ENCODE measurements at regions of chr1 and their contacts with region 1.

Region 1: DNA sequence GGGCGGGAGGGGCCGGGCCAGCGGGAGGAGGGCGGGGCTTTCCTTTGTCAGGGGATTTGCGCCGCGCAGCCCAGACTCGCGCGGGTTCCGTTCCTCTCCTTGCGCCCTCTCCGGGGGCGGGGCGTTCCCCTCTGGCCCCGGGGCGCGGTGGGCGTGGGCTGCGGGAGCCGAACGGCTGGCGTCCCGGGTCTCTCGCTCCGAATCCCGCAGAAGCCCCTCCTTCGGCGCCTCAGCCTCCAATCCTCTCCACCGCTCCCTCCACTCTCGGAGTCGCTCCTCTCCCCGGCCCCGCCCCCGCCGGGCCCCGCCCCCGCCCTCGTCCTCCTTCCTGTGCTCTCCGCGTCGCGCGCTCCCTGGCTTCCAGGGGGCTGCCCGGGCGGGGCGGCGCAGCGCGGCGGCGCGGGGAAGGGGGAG is 82.8 kb upstream of the BMP8A start:
- DNase-seq: peak; percentile 83
- H3K4me3 Mint-ChIP-seq: peak overlapping the region; percentile 88
- H3K27ac Mint-ChIP-seq: no peak overlapping the region
- H3K4me1 Mint-ChIP-seq: peaks cover 58% of the 10 kb centered on the region
- H3K27me3 Mint-ChIP-seq: no peaks in the 10 kb centered on the region

Region 2: DNA sequence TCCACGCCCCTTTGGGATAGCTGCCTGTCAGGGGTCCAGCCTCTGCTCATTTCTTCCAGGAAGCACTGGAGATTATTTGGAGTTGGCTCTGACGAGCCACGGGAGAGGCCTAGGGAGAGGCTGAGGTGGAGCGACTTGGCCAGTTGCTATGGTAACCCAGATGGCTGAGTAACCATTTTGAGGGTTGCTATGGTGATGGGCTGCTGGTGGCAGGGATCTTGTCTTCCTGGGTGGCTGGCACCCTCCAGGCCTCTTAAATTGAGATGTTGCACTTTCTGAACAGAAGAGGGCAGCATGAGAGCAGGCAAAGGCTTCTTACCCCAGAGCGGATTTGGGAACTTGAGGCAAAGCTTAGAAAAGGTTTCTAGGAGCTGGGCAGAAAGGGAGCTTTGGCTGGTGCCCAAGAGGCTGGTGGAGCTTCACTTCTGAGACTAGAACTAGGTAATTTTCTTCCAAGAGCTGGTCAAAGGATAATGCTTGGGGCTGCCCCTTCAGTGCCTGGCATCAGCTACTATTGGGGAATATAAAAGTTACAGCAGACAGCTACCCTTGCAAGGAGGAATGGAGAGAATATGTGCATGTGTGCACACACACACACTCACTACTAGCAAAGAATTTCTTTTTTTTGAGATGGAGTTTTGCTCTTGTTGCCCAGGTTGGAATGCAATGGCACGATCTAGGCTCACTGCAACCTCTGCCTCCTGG is 309.9 kb before region 1 on chr1:
- intact Hi-C with region 1: loop called (anchors 1 kb)
- DNase-seq: peak; percentile 53
- H3K4me3 Mint-ChIP-seq: no peak overlapping the region
- H3K27ac Mint-ChIP-seq: peak overlapping the region; percentile 40
- H3K4me1 Mint-ChIP-seq: peaks cover 30% of the 10 kb centered on the region
- H3K27me3 Mint-ChIP-seq: peaks cover under 1% of the 10 kb centered on the region

Region 3: DNA sequence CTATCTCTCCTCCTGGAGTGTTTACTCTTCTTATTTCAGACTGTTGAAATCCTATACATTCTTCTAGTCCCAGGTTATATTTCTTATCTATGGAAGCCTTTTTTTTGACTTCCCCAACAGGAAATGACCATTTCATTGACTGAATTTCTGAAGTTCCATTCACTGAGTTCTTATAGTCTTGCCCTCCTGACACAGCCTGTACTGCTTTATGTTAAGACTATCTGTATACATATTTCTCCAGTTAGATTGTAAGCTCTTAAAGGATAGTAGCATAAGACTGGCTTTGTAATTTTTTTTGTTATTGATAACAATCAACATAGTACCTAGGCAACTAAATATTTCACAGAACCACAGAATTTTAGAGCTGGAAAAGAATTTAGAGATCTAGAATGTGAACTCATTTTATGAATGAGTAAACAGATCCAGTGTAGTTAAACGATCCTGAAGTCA is 219.0 kb before region 1 on chr1:
- intact Hi-C with region 1: loop called (anchors 5 kb)
- DNase-seq: no peak
- H3K4me3 Mint-ChIP-seq: peak overlapping the region; percentile 37
- H3K27ac Mint-ChIP-seq: peak overlapping the region; percentile 95
- H3K4me1 Mint-ChIP-seq: peaks cover 87% of the 10 kb centered on the region
- H3K27me3 Mint-ChIP-seq: no peaks in the 10 kb centered on the region

Region 4: DNA sequence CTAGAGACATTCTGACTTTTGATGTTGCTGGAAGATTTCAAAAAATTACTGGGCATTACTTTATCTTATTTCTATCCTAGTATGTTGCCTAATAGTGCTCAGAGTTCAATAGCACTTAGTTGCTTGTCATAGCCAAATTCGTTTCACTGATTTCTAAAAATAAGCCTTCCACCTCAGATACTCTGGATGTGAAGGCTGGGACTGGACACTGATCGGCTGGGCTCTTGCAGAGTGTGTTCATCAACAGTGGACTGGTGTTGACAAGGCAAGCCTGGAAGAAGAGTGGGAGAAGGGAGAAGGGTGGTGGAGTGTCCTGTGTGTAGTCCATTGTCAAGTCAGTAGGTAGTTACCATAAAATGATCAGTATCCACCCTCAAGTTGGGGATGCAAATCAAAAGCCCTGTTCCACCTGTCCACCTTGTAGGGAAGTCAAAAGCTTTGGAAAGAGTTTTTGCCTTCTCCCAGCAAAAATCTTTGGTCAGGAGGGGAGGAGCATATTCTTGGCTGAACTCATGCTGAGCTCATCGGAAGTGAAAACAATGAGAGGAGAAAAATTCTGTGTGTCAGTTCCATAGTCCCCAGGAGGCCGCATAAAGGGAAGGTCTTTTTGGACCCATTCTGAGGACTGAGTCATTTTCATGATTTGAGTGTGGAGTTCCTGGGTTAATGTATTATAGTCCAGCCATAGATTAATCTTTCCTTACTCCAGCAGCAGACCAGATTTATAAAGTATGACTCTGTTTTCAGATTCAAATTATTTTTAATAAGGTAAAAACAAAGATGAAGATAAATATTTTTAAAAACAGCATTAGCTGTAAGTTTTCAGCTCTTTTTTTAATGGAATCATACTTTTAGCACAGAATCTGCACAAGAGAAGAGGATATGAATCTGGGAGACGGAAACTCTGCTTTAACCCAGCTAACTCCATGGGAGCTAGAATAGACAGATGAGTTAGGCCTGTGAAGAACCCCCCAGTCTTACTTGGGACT is 16.7 kb before region 1 on chr1:
- intact Hi-C with region 1: loop called (anchors 2 kb)
- DNase-seq: no peak
- H3K4me3 Mint-ChIP-seq: no peak overlapping the region
- H3K27ac Mint-ChIP-seq: peak overlapping the region; percentile 63
- H3K4me1 Mint-ChIP-seq: peaks cover 54% of the 10 kb centered on the region
- H3K27me3 Mint-ChIP-seq: no peaks in the 10 kb centered on the region

Region 5: GRCh38 chr1:39398278-39399021 is 10.2 kb before region 1 on chr1:
- intact Hi-C with region 1: loop called (anchors 1 kb)
- DNase-seq: no peak
- H3K4me3 Mint-ChIP-seq: no peak overlapping the region
- H3K27ac Mint-ChIP-seq: peak overlapping the region; percentile 75
- H3K4me1 Mint-ChIP-seq: peaks cover 63% of the 10 kb centered on the region
- H3K27me3 Mint-ChIP-seq: no peaks in the 10 kb centered on the region

Region 6: GRCh38 chr1:39491146-39491921 is 82.7 kb after region 1 on chr1 and contains the start of gene BMP8A:
- intact Hi-C with region 1: loop called (anchors 1 kb)
- DNase-seq: peak; percentile 69
- H3K4me3 Mint-ChIP-seq: peak within 1 kb of the TSS; percentile 75
- H3K27ac Mint-ChIP-seq: no peak within 1 kb of the TSS
- H3K4me1 Mint-ChIP-seq: peaks cover 11% of the 10 kb centered on the region
- H3K27me3 Mint-ChIP-seq: peaks cover 30% of the 10 kb centered on the region
- total RNA-seq, gene BMP8A: not detected in 2 replicates

Region 7: GRCh38 chr1:39720094-39720999 is 311.7 kb after region 1 on chr1:
- intact Hi-C with region 1: loop called (anchors 10 kb)
- DNase-seq: no peak
- H3K4me3 Mint-ChIP-seq: no peak overlapping the region
- H3K27ac Mint-ChIP-seq: no peak overlapping the region
- H3K4me1 Mint-ChIP-seq: no peaks in the 10 kb centered on the region
- H3K27me3 Mint-ChIP-seq: peaks cover 55% of the 10 kb centered on the region